Endothelial cell of umbilical vein (primary cell): ENCODE measurements at regions of chr2 and their contacts with region 1.

Region 1: DNA sequence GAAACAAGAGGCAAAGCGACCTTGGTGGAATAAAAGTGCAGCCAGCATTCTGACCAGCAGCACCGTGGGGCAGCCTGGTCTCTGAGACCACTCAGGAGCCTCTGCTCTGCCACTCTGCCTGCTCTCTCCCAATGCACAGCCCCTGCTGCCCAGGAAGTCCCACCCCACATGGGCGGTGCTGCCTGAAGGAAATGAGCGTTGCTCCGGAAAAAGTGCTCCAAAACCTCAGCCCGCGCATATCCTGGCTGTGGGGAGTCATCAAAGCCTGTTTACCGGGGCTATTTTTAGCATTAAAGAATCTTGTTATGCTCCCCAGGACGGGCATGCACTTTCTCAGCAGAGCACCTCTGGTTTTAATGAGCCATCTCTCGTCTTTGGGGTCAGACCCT is 54.5 kb downstream of the EPAS1 start:
- DNase-seq: peak; percentile 95
- H3K4me3 ChIP-seq: peak overlapping the region in 1 of 3 experiments; percentile 10
- H3K27ac ChIP-seq: peak overlapping the region; percentile 61
- H3K4me1 ChIP-seq: peaks cover 50% of the 10 kb centered on the region
- H3K27me3 ChIP-seq: no peaks in the 10 kb centered on the region
- CTCF ChIP-seq: no peak
- POLR2A ChIP-seq: peak; percentile 51

Region 2: DNA sequence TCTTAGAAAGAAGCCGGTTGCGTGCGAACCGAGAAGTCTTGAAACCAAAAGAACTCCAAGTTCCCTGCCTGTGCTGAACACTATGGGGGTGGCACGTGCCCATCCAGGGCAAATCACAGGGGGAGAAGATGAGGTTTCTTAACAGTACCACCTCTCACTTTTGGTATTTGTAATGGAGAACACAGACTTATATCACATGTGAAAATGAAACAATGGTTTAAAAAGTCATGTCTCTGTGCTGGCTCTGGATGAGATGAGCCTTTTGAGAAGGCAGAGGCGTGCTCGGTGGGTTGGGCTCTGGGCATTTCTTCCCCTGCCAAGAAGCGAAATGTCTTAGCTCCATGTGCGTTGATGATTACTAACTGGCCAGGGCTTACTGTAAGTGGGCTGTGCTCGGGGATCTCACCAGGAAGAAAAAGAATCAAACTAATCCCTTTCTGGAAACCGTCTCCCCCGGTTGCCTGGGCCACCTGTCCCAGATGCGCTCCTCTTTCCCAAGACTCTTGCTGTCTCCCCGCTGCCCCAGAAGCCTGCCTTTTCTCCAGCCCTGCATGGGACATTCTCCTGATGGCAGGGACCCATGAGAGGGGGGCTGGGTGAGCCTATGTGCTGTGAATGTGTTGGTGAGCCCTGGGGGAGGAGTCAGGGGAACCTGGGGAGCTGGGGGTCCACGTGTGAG is 447.3 kb before region 1 on chr2:
- CTCF ChIA-PET with region 1: no interaction called
- POLR2A ChIA-PET with region 1: no interaction called
- dilution Hi-C with region 1: no loop called
- intact Hi-C with region 1: no loop called
- DNase-seq: no peak
- H3K4me3 ChIP-seq: no peak overlapping the region
- H3K27ac ChIP-seq: no peak overlapping the region
- H3K4me1 ChIP-seq: no peaks in the 10 kb centered on the region
- H3K27me3 ChIP-seq: no peaks in the 10 kb centered on the region
- CTCF ChIP-seq: no peak
- POLR2A ChIP-seq: no peak

Region 3: DNA sequence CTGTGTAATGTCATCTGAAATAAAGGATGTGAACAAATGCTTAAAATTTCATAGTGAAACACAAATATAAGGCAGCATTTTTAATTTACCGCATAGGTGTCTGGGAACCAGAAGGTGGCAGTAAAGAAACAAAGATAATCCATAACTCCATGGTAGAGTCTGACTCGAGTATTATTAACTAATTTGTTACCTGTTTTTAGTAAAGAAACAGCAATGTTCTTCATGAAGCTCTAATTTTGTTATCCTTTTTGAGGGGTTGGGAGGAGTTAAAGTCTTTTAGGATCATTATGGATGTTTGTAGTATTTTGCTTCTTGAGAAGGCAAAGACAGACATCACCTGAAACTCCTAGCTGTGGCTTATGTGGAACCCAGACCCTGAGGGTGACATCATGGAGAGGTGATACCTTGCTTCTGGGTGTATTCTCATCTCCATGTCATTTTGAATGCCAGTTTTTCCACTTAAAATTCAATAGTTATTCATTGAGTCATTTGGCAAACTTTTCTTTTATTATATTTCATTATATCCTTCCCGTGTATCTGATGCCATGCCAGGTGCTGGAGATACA is 340.7 kb before region 1 on chr2:
- CTCF ChIA-PET with region 1: interaction called, 11 read pairs
- POLR2A ChIA-PET with region 1: no interaction called
- dilution Hi-C with region 1: no loop called
- intact Hi-C with region 1: loop called (anchors 1 kb)
- DNase-seq: peak; percentile 72
- H3K4me3 ChIP-seq: no peak overlapping the region
- H3K27ac ChIP-seq: no peak overlapping the region
- H3K4me1 ChIP-seq: peaks cover 16% of the 10 kb centered on the region
- H3K27me3 ChIP-seq: no peaks in the 10 kb centered on the region
- CTCF ChIP-seq: peak; percentile 32 to 57
- POLR2A ChIP-seq: no peak

Region 4: DNA sequence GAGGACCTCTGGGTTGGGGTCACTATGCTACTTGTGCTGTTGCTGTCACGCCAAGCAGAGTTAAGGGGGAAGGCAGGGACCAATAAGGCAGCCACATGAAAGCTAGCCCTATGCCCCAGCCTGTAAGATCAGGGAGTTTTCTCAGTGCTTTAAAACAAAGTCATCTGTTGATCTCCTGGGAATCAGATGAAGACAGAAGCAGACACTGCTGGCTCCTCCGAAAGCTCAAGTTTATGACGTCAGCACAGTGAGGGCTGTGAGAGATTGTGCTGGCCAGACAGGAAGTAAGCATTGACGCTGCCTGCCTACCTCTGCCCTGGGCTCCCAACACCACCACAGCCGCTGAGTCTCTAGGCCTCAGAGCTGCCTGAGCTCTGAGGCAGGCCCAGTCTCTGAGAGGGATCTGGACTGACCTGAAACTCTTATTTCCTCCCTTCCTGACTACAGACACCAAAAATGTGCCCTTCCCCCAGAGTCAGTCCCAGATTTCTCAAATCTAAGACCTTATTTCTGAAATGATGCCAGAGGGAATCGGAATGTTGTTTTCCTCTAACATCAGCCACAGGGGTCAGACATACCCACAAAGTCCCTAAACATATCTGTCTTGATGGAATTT is 172.6 kb before region 1 on chr2:
- CTCF ChIA-PET with region 1: no interaction called
- POLR2A ChIA-PET with region 1: no interaction called
- dilution Hi-C with region 1: no loop called
- intact Hi-C with region 1: loop called (anchors 5 kb)
- DNase-seq: peak; percentile 88
- H3K4me3 ChIP-seq: no peak overlapping the region
- H3K27ac ChIP-seq: peak overlapping the region; percentile 84
- H3K4me1 ChIP-seq: peaks cover 13% of the 10 kb centered on the region
- H3K27me3 ChIP-seq: no peaks in the 10 kb centered on the region
- CTCF ChIP-seq: no peak
- POLR2A ChIP-seq: no peak

Region 5: DNA sequence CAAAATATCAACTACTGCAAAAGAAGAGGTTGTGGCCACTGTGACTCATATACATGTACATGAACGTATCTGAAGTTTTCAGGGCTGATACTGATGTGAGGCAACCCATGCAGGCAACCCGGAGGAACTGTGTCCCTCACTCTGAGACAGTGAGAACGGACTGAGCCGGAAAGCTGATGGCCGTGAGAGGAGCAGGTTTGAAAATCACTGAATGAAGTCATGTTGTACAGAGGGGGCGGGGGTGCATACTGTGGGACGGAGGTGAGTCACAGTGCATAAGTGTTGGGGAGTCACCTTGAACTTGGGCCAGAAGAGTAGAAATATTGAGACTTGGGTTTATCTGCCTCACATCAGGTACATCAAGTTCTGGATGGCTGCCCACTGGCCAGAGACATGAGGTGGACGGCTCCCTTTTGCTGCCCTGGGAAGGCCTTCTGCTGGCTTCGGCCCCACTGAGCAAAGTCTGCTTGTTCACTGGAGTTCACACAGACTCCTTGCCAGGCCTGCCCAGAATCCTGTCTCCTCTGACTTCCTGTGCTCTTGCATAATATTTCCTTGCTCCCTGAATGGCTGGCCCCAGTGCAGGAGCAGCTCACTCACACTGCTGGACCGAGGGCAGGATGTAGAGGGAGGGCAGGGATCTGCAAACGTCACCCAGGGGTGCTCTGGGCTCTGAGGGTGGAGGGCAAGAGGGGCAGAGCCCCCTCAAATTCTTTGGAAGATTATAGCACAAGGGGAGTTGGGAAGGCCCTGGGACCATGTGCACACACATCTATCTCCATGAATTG is 36.4 kb before region 1 on chr2:
- CTCF ChIA-PET with region 1: interaction called, 4 read pairs
- POLR2A ChIA-PET with region 1: no interaction called
- dilution Hi-C with region 1: no loop called
- intact Hi-C with region 1: loop called (anchors 1 kb)
- DNase-seq: peak; percentile 97
- H3K4me3 ChIP-seq: no peak overlapping the region
- H3K27ac ChIP-seq: peak overlapping the region; percentile 80
- H3K4me1 ChIP-seq: peaks cover 44% of the 10 kb centered on the region
- H3K27me3 ChIP-seq: no peaks in the 10 kb centered on the region
- CTCF ChIP-seq: no peak
- POLR2A ChIP-seq: peak; percentile 69

Region 6: DNA sequence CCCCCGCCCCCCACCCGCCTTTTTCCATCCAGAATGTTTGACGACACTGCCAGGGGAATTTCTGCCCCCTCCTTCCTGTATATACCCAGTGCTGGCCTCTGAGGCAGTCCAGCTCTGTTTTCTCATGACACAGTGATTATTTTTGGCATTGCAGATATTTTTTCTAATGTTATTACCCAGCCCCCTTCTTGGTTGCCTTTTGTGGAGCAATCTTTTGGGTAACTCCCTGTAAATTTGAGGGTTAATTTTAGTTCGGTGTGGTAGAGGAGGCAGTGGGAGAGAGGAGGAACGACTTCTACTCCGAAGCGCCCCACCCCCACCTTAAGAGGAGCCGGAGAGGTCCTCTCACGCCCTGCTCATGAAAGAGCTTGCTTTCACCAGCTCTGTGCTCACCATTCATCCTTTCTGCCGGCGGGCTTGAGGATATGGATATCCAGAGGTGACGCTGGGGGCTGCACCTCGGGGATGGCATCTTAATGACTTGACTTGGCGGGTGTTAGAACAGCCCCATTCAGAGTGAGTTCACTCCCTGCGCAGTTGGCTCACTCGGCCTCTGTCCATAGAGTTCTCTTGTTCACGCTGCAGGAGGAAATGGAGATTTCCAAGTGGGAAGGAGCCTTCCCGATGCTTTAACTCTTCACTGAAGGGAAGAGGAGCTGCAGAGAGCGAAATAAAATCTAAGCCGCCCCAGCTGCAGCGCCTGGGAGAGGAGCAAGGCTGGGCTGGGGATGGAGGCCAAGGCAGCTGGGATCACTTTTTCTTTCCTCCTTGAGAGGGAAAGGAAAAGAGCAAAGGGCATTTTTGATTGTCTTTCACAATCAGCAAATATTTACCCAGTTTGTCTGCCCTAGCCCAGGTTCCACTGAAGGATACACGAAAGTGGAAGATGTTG is 16.1 kb before region 1 on chr2:
- CTCF ChIA-PET with region 1: interaction called, 10 read pairs
- POLR2A ChIA-PET with region 1: no interaction called
- dilution Hi-C with region 1: no loop called
- intact Hi-C with region 1: loop called (anchors 1 kb)
- DNase-seq: peak; percentile 88
- H3K4me3 ChIP-seq: peak overlapping the region in 1 of 3 experiments; percentile 29
- H3K27ac ChIP-seq: peak overlapping the region; percentile 87
- H3K4me1 ChIP-seq: peaks cover 37% of the 10 kb centered on the region
- H3K27me3 ChIP-seq: no peaks in the 10 kb centered on the region
- CTCF ChIP-seq: no peak
- POLR2A ChIP-seq: peak; percentile 9

Region 7: DNA sequence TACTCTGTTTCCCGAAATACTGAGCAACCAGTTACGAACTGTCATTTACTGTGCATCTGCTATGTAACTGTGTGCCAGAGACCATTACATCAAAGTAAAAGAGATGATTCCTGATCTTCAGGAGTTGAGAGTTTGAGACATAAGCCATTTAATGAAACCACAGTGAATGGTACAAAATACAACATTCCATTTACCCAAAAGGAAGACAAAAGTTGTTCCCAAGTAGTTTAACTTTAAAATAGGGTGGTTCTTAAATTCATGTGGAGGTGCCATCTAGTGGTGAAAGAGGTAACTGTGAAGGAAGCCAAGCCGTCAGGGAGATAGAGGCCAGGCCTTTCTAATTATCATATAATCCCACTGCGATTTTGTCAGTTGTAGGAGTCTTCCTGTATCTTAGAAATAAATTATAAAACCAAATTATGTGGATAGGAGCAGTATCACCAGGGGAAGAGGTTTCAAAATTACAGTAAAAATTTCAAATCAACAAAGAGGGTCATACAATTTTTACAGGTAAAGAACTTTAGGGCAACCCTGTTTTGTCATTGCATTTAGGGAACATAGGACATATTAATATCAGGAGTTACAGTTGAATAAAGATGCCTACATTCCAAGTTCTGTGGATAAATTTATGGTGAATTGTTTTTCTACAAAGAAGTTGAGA is 13.2 kb after region 1 on chr2:
- CTCF ChIA-PET with region 1: interaction called, 11 read pairs
- POLR2A ChIA-PET with region 1: no interaction called
- dilution Hi-C with region 1: no loop called
- intact Hi-C with region 1: no loop called
- DNase-seq: peak; percentile 70
- H3K4me3 ChIP-seq: no peak overlapping the region
- H3K27ac ChIP-seq: no peak overlapping the region
- H3K4me1 ChIP-seq: peaks cover 24% of the 10 kb centered on the region
- H3K27me3 ChIP-seq: no peaks in the 10 kb centered on the region
- CTCF ChIP-seq: peak; percentile 61 to 63
- POLR2A ChIP-seq: no peak

Region 8: GRCh38 chr2:47109007-47109375 is 757.2 kb after region 1 on chr2:
- CTCF ChIA-PET with region 1: no interaction called
- POLR2A ChIA-PET with region 1: no interaction called
- dilution Hi-C with region 1: no loop called
- intact Hi-C with region 1: no loop called
- DNase-seq: no peak
- H3K4me3 ChIP-seq: no peak overlapping the region
- H3K27ac ChIP-seq: no peak overlapping the region
- H3K4me1 ChIP-seq: no peaks in the 10 kb centered on the region
- H3K27me3 ChIP-seq: no peaks in the 10 kb centered on the region
- CTCF ChIP-seq: no peak
- POLR2A ChIP-seq: no peak